Cardiac septum (tissue), 1 donor: ENCODE measurements at regions of chr4 and their contacts with region 1.

Region 1: GRCh38 chr4:173448603-173449379 is 49.9 kb upstream of the SCRG1 start:
- DNase-seq: no peak

Region 2: GRCh38 chr4:171448919-171449481 is 1999.8 kb before region 1 on chr4:
- intact Hi-C with region 1: no loop called
- DNase-seq: no peak

Region 3: GRCh38 chr4:173413036-173413435 is 35.8 kb before region 1 on chr4:
- intact Hi-C with region 1: no loop called
- DNase-seq: no peak

Region 4: GRCh38 chr4:173486714-173487392 is 38.1 kb after region 1 on chr4:
- intact Hi-C with region 1: loop called (anchors 2 kb)
- DNase-seq: peak; percentile 80